ENCODE measurements at regions of chr15 and their contacts with region 1.

Region 1: DNA sequence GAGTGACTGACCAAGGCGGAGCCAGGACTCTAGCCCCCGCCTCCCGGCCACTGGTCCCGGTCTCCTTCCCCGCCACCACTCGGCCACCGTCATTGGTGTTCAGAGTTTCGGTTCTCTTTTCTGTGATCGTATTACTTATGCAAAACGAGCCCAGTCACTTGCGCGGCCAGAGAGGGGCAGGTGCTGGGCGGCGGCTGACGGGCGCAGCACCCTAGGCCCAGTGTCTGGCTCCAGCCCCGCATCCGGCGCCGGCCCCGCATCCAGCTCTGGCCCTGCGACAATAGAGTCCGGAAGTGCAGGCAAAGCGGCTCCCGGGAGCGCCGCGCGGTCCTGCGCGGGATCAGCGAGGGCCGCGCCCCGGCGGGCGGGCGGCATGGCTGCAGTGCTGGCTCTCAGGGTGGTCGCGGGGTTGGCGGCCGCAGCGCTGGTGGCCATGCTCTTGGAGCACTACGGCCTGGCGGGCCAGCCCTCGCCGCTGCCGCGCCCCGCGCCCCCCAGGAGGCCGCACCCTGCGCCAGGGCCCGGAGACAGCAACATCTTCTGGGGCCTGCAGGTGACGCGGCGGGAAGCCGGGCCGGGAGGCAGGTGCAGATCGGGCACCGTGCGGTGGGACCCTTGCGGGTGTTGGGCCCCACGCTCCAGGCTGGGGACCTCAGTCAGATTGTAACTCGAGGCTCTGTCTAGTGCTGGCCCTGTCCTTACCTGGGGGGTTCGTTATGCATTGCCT is at the start of gene TMEM62:
- DNase-seq: peak; percentile 93
- H3K4me3 ChIP-seq: peak within 1 kb of the TSS; percentile 96
- H3K27ac ChIP-seq: peak within 1 kb of the TSS; percentile 37
- H3K4me1 ChIP-seq: peaks cover 20% of the 10 kb centered on the region
- CTCF ChIP-seq: 0 out of 2 replicates have a peak, but pooled peaks have one; percentile 13
- total RNA-seq, gene TMEM62: 24.2 and 26.4 TPM in 2 replicates

Region 2: GRCh38 chr15:43042885-43043284 is 90.7 kb before region 1 on chr15:
- CTCF ChIA-PET with region 1: no interaction called
- POLR2A ChIA-PET with region 1: no interaction called
- intact Hi-C with region 1: no loop called
- DNase-seq: no peak
- H3K4me3 ChIP-seq: no peak overlapping the region
- H3K27ac ChIP-seq: no peak overlapping the region
- H3K4me1 ChIP-seq: no peaks in the 10 kb centered on the region
- CTCF ChIP-seq: no peak

Region 3: DNA sequence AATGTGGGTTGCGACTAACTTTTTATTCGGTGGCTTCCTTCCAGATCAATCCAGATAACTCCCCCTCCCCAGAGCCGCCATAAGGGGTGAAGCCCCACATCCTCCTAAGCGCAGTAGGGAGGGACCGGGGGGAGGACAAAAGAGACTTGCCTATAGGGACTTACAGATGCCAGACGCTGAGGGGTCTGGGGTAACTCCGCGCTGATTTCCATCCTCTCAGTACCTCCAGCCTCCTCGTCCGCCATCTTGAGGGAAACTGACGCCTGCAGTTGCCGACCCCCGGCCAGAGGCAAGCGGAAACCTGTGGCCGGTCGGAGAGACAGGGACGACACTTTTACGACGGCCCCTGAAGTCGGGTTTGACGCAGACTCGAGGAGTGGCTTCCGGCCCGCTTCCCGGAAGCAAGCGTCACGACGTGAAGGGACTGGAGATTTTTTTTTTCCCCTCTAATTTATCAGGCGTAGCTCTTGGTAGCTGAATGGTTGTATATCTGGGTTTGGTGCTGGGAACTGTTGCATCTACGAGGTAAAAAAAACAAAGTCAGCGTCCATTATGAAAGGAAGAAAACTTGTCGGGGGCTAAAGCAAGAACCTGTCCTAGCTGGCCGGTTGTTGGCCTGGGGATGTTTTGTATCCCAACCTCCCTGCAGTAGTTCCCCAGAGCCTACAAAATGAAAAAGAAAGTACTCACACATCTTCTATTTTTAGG is 27.7 kb before region 1 on chr15 and contains the start of gene UBR1:
- CTCF ChIA-PET with region 1: no interaction called
- POLR2A ChIA-PET with region 1: interaction called, 3 read pairs
- intact Hi-C with region 1: loop called (anchors 1 kb)
- DNase-seq: peak; percentile 97
- H3K4me3 ChIP-seq: peak within 1 kb of the TSS; percentile 91
- H3K27ac ChIP-seq: peak within 1 kb of the TSS; percentile 66
- H3K4me1 ChIP-seq: peaks cover 20% of the 10 kb centered on the region
- CTCF ChIP-seq: no peak
- total RNA-seq, gene UBR1: 19.8 and 20.7 TPM in 2 replicates

Region 4: DNA sequence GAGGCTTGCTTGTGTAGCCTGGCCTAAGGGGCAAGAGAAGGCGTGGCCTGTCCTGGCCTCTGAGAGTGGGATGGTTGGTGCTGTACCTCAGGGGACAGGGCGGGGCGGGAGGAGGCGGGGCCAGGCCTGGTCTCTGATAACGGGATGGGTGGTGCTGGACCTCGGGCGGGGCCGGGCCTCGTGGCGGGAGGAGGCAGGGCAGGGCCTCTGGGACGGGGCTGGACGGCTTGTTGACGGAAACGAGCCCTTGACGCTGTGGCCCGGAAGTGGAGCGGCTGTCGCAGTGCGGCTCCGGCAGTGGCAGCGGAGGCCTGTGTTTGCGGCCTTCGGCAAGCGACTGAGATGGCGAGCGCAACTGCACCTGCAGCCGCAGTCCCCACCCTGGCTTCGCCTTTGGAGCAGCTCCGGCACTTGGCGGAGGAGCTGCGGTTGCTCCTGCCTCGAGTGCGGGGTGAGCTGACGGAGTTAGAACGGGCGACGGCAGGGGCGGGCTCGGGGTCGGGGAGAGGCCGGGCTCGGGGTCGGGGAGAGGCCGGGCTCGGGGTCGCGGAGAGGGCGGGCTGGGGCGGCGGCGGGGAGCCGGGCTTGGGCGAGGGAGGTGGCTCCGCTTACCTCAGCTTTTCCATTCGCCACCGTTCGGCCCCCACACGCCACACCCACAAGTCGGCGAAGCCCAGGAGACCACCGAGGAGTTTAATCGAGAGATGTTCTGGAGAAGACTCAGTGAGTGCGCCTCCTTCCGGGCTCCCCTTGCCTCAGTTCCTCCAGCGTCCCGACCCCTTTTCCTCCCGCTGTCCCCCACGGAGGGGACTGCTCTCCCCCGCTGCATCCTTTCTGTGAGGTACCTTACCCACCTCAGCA is 51.8 kb after region 1 on chr15 and contains the start of gene CCNDBP1:
- CTCF ChIA-PET with region 1: no interaction called
- POLR2A ChIA-PET with region 1: no interaction called
- intact Hi-C with region 1: loop called (anchors 2 kb)
- DNase-seq: peak; percentile 92
- H3K4me3 ChIP-seq: peak within 1 kb of the TSS; percentile 86
- H3K27ac ChIP-seq: peak within 1 kb of the TSS; percentile 72
- H3K4me1 ChIP-seq: peaks cover 13% of the 10 kb centered on the region
- CTCF ChIP-seq: peak; percentile 72
- total RNA-seq, gene CCNDBP1: 46.9 and 56.0 TPM in 2 replicates

Region 5: GRCh38 chr15:43218908-43219706 is 85.5 kb after region 1 on chr15:
- CTCF ChIA-PET with region 1: no interaction called
- POLR2A ChIA-PET with region 1: no interaction called
- intact Hi-C with region 1: no loop called
- DNase-seq: peak; percentile 6
- H3K4me3 ChIP-seq: no peak overlapping the region
- H3K27ac ChIP-seq: no peak overlapping the region
- H3K4me1 ChIP-seq: no peaks in the 10 kb centered on the region
- CTCF ChIP-seq: peak; percentile 38; the same call in 1 of the 2 replicates